Activated CD8-positive, alpha-beta memory T cell treated with anti-CD3 and anti-CD28 coated beads, Interleukin-2, amount 10 ng/mL, durations not matched to agents 7 days and 5 days (primary cell): ENCODE measurements at regions of chr7 and their contacts with region 1.

Region 1: DNA sequence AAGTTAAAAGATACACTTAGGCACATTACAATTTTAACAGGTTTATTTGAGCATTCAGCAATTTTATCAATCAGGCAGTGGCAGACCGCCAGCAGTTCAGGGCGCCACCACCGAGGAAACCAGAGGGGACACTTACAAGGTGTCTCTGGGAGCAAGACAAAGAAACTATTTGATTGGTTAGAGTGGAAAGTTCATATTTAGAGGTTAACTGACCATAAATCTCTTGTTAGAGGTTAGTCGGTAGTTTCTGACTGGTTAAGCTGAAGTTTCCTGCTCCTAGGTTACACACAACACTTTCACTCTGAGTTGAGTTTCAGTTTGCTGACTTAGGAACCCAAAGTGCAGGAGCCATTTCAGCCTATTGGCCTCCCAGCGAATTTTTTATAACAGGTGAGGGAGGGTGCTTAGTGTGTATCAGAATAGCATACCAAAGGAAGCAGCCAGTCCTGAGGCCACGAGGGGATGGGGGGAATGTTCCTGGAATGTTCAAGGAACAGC is 10.8 kb upstream of the PVRIG start:
- DNase-seq: peak; percentile 88
- ATAC-seq: peak; percentile 89
- H3K4me3 Mint-ChIP-seq: peak overlapping the region; percentile 40
- H3K27ac Mint-ChIP-seq: peak overlapping the region; percentile 77
- H3K4me1 Mint-ChIP-seq: peaks cover 48% of the 10 kb centered on the region
- H3K27me3 Mint-ChIP-seq: no peaks in the 10 kb centered on the region

Region 2: GRCh38 chr7:100049441-100050311 is 159.3 kb before region 1 on chr7 and contains the start of gene ZSCAN21:
- CTCF ChIA-PET with region 1: no interaction called
- DNase-seq: peak; percentile 82
- ATAC-seq: peak; percentile 91
- H3K4me3 Mint-ChIP-seq: peak within 1 kb of the TSS; percentile 92
- H3K27ac Mint-ChIP-seq: peak within 1 kb of the TSS; percentile 93
- H3K4me1 Mint-ChIP-seq: peaks cover 20% of the 10 kb centered on the region
- H3K27me3 Mint-ChIP-seq: no peaks in the 10 kb centered on the region
- total RNA-seq, gene ZSCAN21: 5.6 to 7.9 TPM

Region 3: DNA sequence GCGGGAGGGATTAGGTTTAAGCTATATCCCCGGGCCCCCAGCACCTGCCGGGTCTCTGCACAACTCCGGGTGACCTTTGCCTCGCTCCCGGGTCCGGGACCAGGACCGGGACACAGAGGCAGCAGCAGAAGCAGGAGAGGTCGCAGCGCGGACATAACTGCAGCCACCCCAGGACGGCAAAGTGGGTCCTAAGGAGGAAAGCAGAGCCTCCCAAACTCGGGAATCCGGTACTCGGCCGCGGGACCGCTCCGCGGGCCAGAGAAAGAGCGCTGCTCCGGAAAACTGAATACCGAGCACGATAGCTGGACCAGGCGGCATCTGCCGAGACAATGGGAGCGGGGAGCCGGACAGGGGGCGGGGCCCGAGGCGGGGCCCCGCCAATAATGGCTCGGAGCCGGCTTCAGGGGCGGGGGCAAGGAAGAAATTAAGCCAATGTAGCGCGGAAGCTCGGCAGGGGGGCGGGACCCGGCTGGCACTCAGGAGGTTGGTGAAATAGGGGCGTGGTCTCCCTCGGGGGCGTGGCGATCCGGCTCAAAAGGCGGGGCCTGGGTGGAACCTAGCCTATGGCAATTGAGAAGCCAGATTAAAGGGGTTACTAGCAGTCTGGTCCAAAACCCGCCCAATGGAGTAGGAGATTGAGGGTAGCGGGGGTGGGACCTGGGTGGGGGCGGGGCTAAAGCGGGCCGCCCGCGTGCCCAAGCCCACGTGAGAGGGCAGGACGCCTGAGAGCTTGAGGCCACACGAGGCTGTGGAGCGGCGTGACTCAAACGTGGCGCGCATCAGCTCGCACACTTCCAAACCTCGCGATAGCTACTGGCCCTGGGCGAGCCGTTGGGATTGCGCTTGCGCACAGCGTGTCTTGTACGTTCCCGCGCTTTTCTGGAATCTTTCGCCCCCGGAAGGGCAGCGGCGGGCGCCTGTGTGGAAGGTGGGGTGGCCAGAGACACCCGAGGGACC is 31.6 kb before region 1 on chr7 and contains the starts of genes GPC2 and STAG3:
- CTCF ChIA-PET with region 1: interaction called, 10 read pairs
- DNase-seq: peak; percentile 98
- ATAC-seq: peak; percentile 93
- H3K4me3 Mint-ChIP-seq: peak within 1 kb of the TSS; percentile 67
- H3K27ac Mint-ChIP-seq: peak within 1 kb of the TSS; percentile 37
- H3K4me1 Mint-ChIP-seq: peaks cover 33% of the 10 kb centered on the region
- H3K27me3 Mint-ChIP-seq: peaks cover 26% of the 10 kb centered on the region
- total RNA-seq, gene GPC2: 2.9 to 6.2 TPM
- total RNA-seq, gene STAG3: 8.1 to 20.2 TPM

Region 4: GRCh38 chr7:100195222-100195621 is 13.7 kb before region 1 on chr7:
- CTCF ChIA-PET with region 1: interaction called, 80 read pairs
- DNase-seq: no peak
- ATAC-seq: no peak
- H3K4me3 Mint-ChIP-seq: no peak overlapping the region
- H3K27ac Mint-ChIP-seq: no peak overlapping the region
- H3K4me1 Mint-ChIP-seq: peaks cover 11% of the 10 kb centered on the region
- H3K27me3 Mint-ChIP-seq: peaks cover 2% of the 10 kb centered on the region